ENCODE measurements at regions of chr17 and their contacts with region 1.

Region 1: DNA sequence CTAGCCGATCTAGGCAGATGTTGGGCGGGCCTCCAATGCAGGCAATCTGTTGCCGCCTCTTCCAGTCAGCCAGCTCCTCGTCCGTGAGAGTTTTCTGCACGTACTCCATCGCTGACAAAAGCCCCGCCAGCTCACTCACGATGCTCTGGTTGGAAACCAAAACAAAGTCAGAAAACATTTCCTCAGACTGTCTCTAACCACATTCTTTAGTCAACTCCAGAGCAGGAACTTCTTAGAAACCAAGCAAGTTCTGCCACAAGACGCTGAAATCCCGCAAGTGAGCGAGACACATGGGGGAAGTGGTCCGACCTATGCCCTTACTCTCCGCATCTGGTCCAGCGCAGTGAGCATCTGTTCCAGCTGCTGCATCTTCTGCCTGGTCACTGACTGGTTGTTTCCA is 49.1 kb downstream of the STAT5A start:
- DNase-seq: peak in 34 of 35 experiments; percentile 45 to 86 (median 70)
- ATAC-seq: peak; percentile 87 to 90 (median 88)
- H3K4me3 ChIP-seq: no peak overlapping the region
- H3K4me3 Mint-ChIP-seq: peak overlapping the region; percentile 60 to 71 (median 62)
- H3K27ac ChIP-seq: peak overlapping the region; percentile 74
- H3K27ac Mint-ChIP-seq: peak overlapping the region; percentile 98
- H3K4me1 ChIP-seq: peaks cover 15 to 43% of the 10 kb centered on the region in 2 experiments
- H3K4me1 Mint-ChIP-seq: peaks cover 35 to 54% (median 51%) of the 10 kb centered on the region in 3 donors
- H3K27me3 ChIP-seq: no peaks in the 10 kb centered on the region
- H3K27me3 Mint-ChIP-seq: no peaks in the 10 kb centered on the region

Region 2: GRCh38 chr17:42358434-42358833 is 21.0 kb after region 1 on chr17:
- CTCF ChIA-PET with region 1: interaction called in 1 of 2 experiments, 15 read pairs
- POLR2A ChIA-PET with region 1: interaction called in 1 of 2 experiments, 3 read pairs
- DNase-seq: no peak
- ATAC-seq: no peak
- H3K4me3 ChIP-seq: no peak overlapping the region
- H3K4me3 Mint-ChIP-seq: no peak overlapping the region
- H3K27ac ChIP-seq: no peak overlapping the region
- H3K27ac Mint-ChIP-seq: peak overlapping the region in 1 of 2 donors; percentile 11
- H3K4me1 ChIP-seq: peaks cover 4 to 28% of the 10 kb centered on the region in 2 experiments
- H3K4me1 Mint-ChIP-seq: peaks cover 53 to 72% (median 62%) of the 10 kb centered on the region in 3 donors
- H3K27me3 ChIP-seq: no peaks in the 10 kb centered on the region
- H3K27me3 Mint-ChIP-seq: no peaks in the 10 kb centered on the region